ENCODE measurements at regions of chr7 and their contacts with region 1.

Region 1: DNA sequence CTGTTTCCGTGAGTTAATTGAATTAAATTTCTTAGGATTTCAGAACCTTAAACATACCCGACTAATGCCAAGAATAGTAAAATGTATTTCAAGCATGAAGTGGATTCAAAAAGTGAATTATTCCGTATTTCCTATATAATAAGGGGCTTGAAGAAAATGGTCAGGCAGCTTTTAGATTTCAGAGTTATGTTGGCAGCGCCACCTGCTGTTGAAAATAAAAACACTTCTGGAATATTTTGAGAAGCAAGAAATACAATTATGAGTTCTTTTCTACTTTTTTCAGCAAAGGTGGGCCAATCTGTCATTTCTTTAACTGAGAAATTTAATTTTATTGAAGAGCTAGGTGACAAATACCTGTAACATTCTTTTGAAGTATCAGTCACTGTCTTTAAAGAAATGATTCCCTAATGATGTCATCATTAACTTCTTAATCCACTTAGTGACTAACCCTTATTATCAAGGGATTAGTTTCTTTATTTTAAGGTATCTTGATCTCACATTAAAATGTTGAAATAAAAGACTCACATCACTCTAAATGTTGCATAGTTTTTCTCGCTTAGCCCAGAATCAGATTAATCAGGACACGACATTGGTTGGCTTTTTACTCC is 36.6 kb upstream of the AGR3 start:
- DNase-seq: no peak
- ATAC-seq: no peak
- H3K4me3 ChIP-seq: no peak overlapping the region
- H3K27ac ChIP-seq: no peak overlapping the region
- H3K4me1 ChIP-seq: peaks cover 0 to 7% (median 6%) of the 10 kb centered on the region in 3 donors
- H3K27me3 ChIP-seq: no peaks in the 10 kb centered on the region
- CTCF ChIP-seq: peak; percentile 34 to 59 (median 42)

Region 2: GRCh38 chr7:16695621-16696237 is 222.7 kb before region 1 on chr7:
- intact Hi-C with region 1: loop called in 2 of 3 experiments (anchors 10 kb)
- DNase-seq: peak in 2 of 6 donors; percentile 17 to 48
- ATAC-seq: peak; percentile 75 to 96 (median 93)
- H3K4me3 ChIP-seq: no peak overlapping the region
- H3K27ac ChIP-seq: no peak overlapping the region
- H3K4me1 ChIP-seq: no peaks in the 10 kb centered on the region
- H3K27me3 ChIP-seq: no peaks in the 10 kb centered on the region
- CTCF ChIP-seq: peak in 3 of 4 donors; percentile 29 to 58 (median 44)

Region 3: DNA sequence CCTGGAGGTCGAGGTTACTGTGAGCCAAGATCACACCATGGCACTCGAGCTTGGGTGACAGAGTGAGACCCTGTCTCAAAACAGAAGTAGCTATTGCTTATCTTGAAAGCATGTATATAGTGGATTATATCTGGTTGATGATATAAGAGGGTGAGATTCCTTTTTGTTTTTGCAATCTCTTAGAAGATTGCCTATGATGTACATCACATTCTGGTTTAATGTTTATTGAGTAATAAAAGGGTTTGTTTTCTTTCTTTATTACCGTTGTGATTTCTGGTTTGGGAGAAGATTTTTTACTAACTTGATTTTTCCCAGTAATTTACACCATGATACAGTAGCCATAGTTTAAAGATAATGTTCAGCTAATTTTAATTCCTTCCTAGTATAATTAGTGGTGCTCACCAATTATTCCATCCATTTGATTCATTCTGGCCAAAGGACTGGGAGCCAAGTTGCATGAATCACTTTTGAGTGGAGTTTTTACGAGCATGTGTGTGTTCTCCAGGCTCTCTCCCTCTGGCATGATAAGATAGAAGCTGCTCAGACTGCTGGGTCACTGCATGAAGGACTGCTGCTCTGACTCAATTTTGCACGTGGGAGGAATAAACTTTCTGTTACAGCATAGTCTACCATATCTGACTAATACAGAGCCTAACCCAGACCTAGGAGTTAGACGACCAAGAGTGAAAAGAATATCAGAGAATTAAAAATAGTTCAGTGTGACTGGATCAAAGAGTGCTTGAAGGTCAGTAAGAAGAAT is 178.3 kb before region 1 on chr7:
- intact Hi-C with region 1: no loop called
- DNase-seq: peak in 3 of 6 donors; percentile 19 to 40 (median 37)
- ATAC-seq: peak; percentile 86 to 97 (median 94)
- H3K4me3 ChIP-seq: no peak overlapping the region
- H3K27ac ChIP-seq: no peak overlapping the region
- H3K4me1 ChIP-seq: peaks cover 0 to 9% (median 0%) of the 10 kb centered on the region in 3 donors
- H3K27me3 ChIP-seq: no peaks in the 10 kb centered on the region
- CTCF ChIP-seq: no peak

Region 4: GRCh38 chr7:16801111-16801542 is 117.3 kb before region 1 on chr7:
- intact Hi-C with region 1: loop called in 1 of 3 experiments (anchors 10 kb)
- DNase-seq: no peak
- ATAC-seq: peak; percentile 51 to 85 (median 76)
- H3K4me3 ChIP-seq: no peak overlapping the region
- H3K27ac ChIP-seq: no peak overlapping the region
- H3K4me1 ChIP-seq: peaks cover 0 to 11% (median 0%) of the 10 kb centered on the region in 3 donors
- H3K27me3 ChIP-seq: no peaks in the 10 kb centered on the region
- CTCF ChIP-seq: peak; percentile 15 to 39 (median 24)

Region 5: DNA sequence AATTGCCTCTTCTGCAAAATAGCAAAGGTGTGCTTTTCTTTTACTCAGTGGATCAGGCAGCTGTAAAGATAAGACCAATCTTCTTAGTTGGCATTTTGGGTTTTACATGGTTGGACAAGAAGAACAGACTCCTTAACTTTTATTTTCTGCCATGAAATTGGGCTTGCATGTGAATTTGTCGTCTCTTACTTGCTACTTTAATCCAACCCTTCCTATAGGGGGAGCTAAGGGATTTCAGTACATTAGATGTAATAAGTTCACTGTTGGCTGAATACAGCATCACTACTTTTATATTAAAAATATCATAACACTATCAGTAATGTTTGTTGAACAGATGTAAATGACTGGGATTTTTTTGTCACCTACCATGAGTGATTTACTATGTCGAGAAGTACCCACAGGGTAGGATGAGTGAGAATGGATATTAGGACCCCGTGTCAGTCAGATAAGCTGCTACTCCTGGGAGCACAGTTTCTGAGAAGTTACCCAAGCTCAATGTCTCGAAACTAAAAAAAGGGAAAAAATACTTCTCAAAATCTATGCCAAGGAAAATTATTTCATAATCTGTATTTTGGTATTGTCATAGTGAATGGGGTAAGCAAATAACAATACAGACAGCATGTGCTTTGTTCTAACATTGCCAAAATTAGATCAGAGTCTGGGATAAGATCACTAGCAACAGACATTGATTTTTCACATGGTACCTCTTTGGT is 90.8 kb after region 1 on chr7:
- intact Hi-C with region 1: no loop called
- DNase-seq: no peak
- ATAC-seq: peak in 3 of 4 donors; percentile 68 to 80 (median 80)
- H3K4me3 ChIP-seq: no peak overlapping the region
- H3K27ac ChIP-seq: peak overlapping the region in 1 of 4 donors; percentile 2
- H3K4me1 ChIP-seq: no peaks in the 10 kb centered on the region
- H3K27me3 ChIP-seq: no peaks in the 10 kb centered on the region
- CTCF ChIP-seq: peak in 2 of 4 donors; percentile 7 to 23

Measured in pancreas (tissue), 10 donors.